AG04449 (cell line): ENCODE measurements at regions of chr21 and their contacts with region 1.

Region 1: GRCh38 chr21:20999659-21000058 is 1.4 kb downstream of the NCAM2 start:
- DNase-seq: no peak
- H3K4me3 ChIP-seq: peak overlapping the region; percentile 1; the same call in 1 of the 2 replicates
- CTCF ChIP-seq: peak; percentile 74

Region 2: DNA sequence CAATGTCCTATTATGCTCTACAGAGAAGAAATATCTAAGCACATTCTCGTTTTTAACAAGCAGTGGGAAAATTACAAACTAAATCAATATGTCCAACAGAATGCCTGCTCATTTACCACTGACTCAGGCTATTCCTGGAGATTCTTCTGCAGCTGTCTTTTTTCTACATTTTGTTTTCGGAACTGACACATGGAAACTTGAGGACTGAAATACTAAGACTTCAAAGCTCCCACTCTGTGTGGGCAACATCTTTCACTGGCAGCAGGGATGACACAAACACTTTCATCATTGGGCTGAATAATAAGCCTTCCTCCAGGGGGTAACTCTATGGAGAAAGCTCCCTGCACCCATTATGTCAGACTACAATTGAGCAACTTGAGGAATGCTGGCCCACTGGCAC is 177.0 kb before region 1 on chr21:
- CTCF ChIA-PET with region 1: no interaction called
- POLR2A ChIA-PET with region 1: no interaction called
- DNase-seq: no peak
- H3K4me3 ChIP-seq: no peak overlapping the region
- CTCF ChIP-seq: no peak

Region 3: DNA sequence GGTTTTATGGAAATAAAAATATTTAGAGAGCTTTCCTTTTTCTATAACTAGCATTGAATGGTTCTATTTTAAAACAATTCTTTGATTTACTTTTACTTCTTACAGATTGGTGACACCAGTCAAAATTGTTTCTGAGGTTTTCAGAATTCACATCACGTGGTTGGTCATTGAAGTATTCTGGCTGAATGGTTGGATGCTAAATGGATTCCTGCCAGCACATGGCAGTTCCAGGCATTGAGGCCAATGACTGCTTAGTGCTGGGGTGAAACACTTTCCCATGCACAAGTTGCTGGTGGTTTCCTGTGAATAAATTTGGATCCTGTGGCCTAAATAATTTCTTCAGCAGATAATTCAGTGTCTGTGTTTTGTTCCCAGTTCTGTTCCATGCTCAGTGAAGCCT is 19.2 kb after region 1 on chr21:
- CTCF ChIA-PET with region 1: interaction called, 13 read pairs
- POLR2A ChIA-PET with region 1: no interaction called
- DNase-seq: no peak
- H3K4me3 ChIP-seq: no peak overlapping the region
- CTCF ChIP-seq: no peak

Region 4: DNA sequence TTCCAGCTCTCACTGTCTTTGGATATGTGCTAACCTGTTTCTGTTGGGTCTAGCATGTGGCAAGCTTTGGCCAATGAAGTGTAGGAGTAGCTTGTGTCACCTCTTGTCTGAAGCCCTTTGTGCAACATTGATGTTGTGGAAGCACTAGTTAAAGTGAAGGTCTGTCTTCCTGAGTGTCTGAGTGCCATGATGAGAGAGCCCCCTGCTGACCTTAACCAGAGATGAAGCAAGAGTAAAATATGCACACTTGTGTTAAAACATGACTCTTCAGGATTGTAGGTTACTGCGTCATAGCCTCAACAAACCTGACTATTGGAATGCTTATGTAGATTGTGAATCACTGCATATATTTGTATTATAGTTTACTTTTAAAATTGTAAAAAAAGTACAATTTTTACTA is 102.3 kb after region 1 on chr21:
- CTCF ChIA-PET with region 1: interaction called, 44 read pairs
- POLR2A ChIA-PET with region 1: interaction called, 3 read pairs
- DNase-seq: peak; percentile 29
- H3K4me3 ChIP-seq: no peak overlapping the region
- CTCF ChIP-seq: peak; percentile 37

Region 5: GRCh38 chr21:21373969-21374368 is 374.3 kb after region 1 on chr21:
- CTCF ChIA-PET with region 1: interaction called, 10 read pairs
- POLR2A ChIA-PET with region 1: no interaction called
- DNase-seq: no peak
- H3K4me3 ChIP-seq: no peak overlapping the region
- CTCF ChIP-seq: peak; percentile 29

Region 6: GRCh38 chr21:21688875-21689274 is 689.2 kb after region 1 on chr21:
- CTCF ChIA-PET with region 1: interaction called, 11 read pairs
- POLR2A ChIA-PET with region 1: no interaction called
- DNase-seq: no peak
- H3K4me3 ChIP-seq: no peak overlapping the region
- CTCF ChIP-seq: peak; percentile 71

Region 7: DNA sequence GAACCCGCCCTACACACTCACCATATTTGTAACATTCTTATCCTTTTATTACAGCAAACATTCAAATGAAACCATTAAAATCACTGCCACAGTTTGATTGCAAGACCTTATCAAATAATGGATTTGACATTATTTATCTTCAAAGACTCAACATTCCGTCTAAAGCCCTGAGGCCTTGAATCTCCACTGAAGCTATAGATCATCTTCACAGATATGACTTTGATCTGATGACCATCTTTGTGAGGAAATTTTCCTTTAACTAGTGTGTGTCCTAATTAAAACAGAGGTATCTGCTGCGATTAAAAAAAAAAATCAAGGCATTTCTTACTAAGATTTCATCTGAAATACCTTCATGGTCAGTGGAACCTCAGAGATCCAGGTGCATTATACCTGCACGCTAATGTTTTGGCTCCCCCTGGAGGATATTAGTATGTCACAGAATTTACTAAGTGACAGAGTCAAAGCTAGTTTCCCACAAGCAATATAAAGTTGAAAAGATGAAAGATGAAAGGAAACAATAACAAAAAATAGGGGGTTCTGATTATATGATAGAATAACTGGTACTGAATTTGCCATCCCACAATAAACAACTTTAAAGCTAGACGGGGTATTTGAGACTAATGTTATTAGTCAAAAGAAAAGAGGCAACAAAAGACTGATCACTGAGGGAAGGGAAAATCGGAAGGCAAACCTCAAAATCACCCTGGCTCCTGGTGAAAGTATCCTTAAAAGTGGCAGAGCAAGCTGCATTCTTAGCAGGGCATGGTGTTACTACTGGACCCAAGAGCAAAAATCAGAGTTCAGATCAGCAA is 922.0 kb after region 1 on chr21:
- CTCF ChIA-PET with region 1: interaction called, 15 read pairs
- POLR2A ChIA-PET with region 1: no interaction called
- DNase-seq: no peak
- H3K4me3 ChIP-seq: no peak overlapping the region
- CTCF ChIP-seq: peak; percentile 39

Region 8: DNA sequence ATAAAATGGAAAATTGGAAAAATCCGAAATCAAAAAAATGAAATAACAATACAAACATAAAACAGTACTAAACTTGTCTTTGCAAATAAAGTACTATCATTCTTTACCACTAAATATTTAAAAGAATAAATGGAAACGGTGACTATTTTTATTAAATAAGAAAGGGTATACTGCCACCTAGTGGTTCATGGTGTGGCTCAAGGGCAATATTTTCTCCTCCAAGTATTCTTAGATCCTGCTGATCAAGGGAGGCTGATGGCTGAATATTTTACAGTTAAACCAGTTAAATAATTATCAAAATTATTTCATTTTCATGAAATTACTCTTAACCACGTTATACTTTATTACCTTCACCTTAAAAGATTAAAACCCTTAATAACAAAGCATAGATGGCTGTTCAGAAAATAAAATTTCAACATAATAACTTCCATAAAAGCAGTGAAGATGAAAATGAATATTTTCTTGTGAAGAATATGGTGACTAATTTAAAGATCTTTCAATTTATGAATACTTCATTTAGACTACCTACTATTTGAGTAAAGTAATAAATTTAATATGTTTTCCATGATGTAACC is 1792.4 kb after region 1 on chr21:
- CTCF ChIA-PET with region 1: interaction called, 34 read pairs
- POLR2A ChIA-PET with region 1: no interaction called
- DNase-seq: no peak
- H3K4me3 ChIP-seq: no peak overlapping the region
- CTCF ChIP-seq: peak; percentile 40